ENCODE measurements at regions of chr1 and their contacts with region 1.

Region 1: GRCh38 chr1:100543640-100544039 is 5.7 kb downstream of the GPR88 start:
- DNase-seq: no peak
- ATAC-seq: peak; percentile 85
- H3K4me3 ChIP-seq: no peak overlapping the region
- H3K27ac ChIP-seq: no peak overlapping the region
- H3K4me1 ChIP-seq: peaks cover 12% of the 10 kb centered on the region
- H3K27me3 ChIP-seq: peaks cover 4 to 21% of the 10 kb centered on the region in 2 experiments
- CTCF ChIP-seq: peak; percentile 50 to 69 (median 64)
- EP300 ChIP-seq: no peak
- POLR2A ChIP-seq: no peak
- RAD21 ChIP-seq: peak; percentile 58

Region 2: GRCh38 chr1:100523038-100523652 is 20.5 kb before region 1 on chr1:
- CTCF ChIA-PET with region 1: interaction called, 10 read pairs
- POLR2A ChIA-PET with region 1: no interaction called
- RAD21 ChIA-PET with region 1: no interaction called
- SMC1A ChIA-PET with region 1: no interaction called
- in situ Hi-C with region 1: no loop called
- intact Hi-C with region 1: no loop called
- DNase-seq: peak; percentile 21
- ATAC-seq: peak; percentile 94
- H3K4me3 ChIP-seq: no peak overlapping the region
- H3K27ac ChIP-seq: no peak overlapping the region
- H3K4me1 ChIP-seq: peaks cover 11% of the 10 kb centered on the region
- H3K27me3 ChIP-seq: no peaks in the 10 kb centered on the region
- CTCF ChIP-seq: no peak
- EP300 ChIP-seq: 0 out of 4 replicates have a peak, but pooled peaks of 1 of the 2 experiments have one; percentile 27
- POLR2A ChIP-seq: no peak
- RAD21 ChIP-seq: no peak

Measured in GM12878 (cell line).